ENCODE measurements at regions of chr4 and their contacts with region 1.

Region 1: GRCh38 chr4:176841717-176842116 is 49.0 kb upstream of the VEGFC start:
- DNase-seq: no peak
- H3K4me3 ChIP-seq: no peak overlapping the region
- H3K27ac ChIP-seq: no peak overlapping the region
- H3K4me1 ChIP-seq: no peaks in the 10 kb centered on the region
- H3K27me3 ChIP-seq: no peaks in the 10 kb centered on the region
- CTCF ChIP-seq: no peak
- EP300 ChIP-seq: no peak
- POLR2A ChIP-seq: no peak

Region 2: GRCh38 chr4:176690716-176691115 is 151.0 kb before region 1 on chr4:
- in situ Hi-C with region 1: no loop called
- intact Hi-C with region 1: no loop called
- DNase-seq: no peak
- H3K4me3 ChIP-seq: no peak overlapping the region
- H3K27ac ChIP-seq: no peak overlapping the region
- H3K4me1 ChIP-seq: no peaks in the 10 kb centered on the region
- H3K27me3 ChIP-seq: no peaks in the 10 kb centered on the region
- CTCF ChIP-seq: no peak
- EP300 ChIP-seq: no peak
- POLR2A ChIP-seq: no peak

Region 3: DNA sequence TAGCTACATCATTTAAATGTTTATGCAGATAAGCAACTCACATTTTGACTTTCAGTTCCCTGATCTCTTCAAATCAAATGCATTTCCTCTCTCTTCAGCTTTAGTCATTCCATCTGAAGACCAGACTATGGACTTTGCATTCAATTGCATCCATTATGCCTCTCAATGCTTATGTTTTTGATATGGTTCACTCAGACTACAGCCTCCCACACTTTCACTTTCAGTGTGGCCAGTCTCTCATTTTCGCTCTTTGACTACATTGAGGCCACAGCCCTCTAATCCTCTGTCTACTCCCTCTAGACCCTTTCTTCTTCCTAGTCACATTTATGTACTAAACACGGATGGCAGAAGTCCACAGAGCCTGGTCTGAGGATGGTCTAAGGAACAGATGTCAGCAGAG is 24.5 kb before region 1 on chr4:
- in situ Hi-C with region 1: no loop called
- intact Hi-C with region 1: loop called (anchors 2 kb)
- DNase-seq: no peak
- H3K4me3 ChIP-seq: no peak overlapping the region
- H3K27ac ChIP-seq: no peak overlapping the region
- H3K4me1 ChIP-seq: no peaks in the 10 kb centered on the region
- H3K27me3 ChIP-seq: no peaks in the 10 kb centered on the region
- CTCF ChIP-seq: no peak
- EP300 ChIP-seq: no peak
- POLR2A ChIP-seq: no peak

Region 4: DNA sequence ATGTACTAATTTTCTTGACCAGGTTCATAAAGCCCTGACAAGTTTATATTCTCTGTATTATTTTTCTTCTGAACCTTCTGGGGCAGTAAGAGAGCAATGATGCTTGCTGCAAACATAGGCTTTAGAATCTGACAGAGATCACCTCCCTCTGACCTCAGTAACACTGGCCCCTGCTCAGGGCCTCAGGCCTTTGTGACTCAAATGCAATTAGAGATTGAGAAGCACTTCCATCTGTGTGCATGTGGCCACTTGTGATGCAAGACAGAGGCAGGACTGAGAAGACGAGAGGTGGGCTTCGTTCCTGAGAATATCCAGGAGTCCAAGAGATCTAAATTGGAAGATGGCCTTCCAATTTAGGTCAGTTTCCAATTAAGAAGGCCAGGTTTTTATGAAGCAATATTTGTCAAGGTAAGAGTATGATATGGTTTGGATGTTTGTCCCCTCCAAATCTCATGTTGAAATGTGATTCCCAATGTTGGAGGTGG is 33.8 kb after region 1 on chr4:
- in situ Hi-C with region 1: no loop called
- intact Hi-C with region 1: no loop called
- DNase-seq: no peak
- H3K4me3 ChIP-seq: no peak overlapping the region
- H3K27ac ChIP-seq: no peak overlapping the region
- H3K4me1 ChIP-seq: no peaks in the 10 kb centered on the region
- H3K27me3 ChIP-seq: no peaks in the 10 kb centered on the region
- CTCF ChIP-seq: no peak
- EP300 ChIP-seq: no peak
- POLR2A ChIP-seq: no peak

Measured in transverse colon (tissue), 4 donors.